ENCODE measurements at regions of chr19 and their contacts with region 1.

Region 1: DNA sequence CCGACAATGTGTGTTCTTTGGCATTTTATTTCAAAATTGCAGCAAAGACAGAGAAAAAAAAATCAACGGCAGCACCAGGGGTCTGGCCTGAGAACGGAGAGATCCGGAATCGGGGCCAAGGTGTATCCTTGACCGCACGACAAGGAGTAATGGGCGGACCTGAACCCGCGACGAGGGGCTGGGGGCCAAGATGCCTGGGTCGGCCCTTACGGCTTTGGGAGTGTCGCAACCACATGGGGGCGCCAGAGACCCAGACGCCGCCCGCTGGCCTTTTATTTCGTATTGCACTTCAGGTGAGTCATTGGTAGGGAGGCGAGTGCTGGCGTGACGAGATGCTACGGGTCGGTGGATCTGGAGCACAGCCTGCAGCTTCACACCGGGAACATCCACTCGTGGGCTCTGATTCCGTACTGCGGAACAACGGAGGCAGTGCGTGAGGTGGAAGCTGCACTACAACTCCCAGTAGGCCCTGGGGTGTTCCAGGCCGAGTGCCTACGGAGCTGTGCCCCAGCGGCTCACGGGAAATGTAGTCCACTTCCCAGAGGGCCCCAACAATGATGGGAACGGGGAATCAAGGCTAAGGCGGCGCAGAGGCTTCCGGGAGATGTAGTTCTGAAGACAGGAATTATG is 15.7 kb downstream of the BCAT2 start:
- DNase-seq: peak; percentile 92
- H3K4me3 ChIP-seq: peak overlapping the region; percentile 19 to 38
- H3K27ac ChIP-seq: peak overlapping the region; percentile 80 to 83
- H3K4me1 ChIP-seq: no peaks in the 10 kb centered on the region
- H3K27me3 ChIP-seq: no peaks in the 10 kb centered on the region
- CTCF ChIP-seq: peak; percentile 96 to 100 (median 99)
- POLR2A ChIP-seq: peak; percentile 8

Region 2: DNA sequence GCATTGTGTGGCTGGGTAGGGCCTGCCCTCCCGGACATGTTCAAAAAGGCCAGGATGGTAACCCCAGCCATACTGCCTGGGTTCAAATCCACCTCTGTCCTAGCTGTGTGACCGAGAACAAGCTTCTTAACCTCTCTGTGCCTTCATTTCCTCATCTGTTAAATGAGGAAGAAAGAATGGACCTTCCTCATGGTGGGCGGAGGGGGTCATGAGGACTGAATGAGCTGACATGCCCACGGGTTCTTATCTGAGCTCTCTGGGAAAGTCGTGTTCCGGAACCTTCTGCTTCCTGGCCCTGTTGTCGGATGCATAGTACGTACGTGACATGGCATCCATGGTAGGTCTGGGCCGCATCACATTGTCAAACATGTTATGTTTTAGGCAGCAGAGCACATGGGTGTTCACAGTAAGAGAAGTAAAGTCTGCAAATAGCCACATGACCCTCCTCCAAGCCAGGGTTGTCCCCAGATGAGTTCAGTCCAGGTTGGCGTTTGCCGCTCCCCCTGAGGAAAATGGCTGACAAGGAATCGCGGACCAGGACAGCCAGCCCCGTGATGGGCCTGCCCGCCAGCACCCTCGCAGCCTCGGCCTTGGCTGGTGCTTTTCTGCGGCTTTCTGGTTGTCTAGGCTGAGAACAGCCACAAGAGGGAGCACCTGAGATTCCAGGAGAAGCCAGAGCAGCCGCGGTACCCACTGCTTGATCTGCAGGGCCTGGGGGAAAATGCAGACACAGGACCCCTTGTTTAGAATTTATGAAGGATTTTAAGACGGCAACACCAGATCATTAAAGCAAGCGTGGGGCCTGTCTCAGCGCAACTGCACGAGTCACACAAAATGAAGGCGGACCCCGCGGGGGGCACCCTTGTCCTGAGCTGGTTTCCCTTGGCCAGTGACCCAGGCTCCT is 120.0 kb before region 1 on chr19:
- intact Hi-C with region 1: no loop called
- DNase-seq: peak; percentile 84
- H3K4me3 ChIP-seq: no peak overlapping the region
- H3K27ac ChIP-seq: no peak overlapping the region
- H3K4me1 ChIP-seq: no peaks in the 10 kb centered on the region
- H3K27me3 ChIP-seq: no peaks in the 10 kb centered on the region
- CTCF ChIP-seq: peak; percentile 74 to 90 (median 84)
- POLR2A ChIP-seq: no peak

Region 3: GRCh38 chr19:48738557-48739399 is 56.4 kb before region 1 on chr19:
- intact Hi-C with region 1: no loop called
- DNase-seq: peak; percentile 94
- H3K4me3 ChIP-seq: peak overlapping the region; percentile 38 to 40
- H3K27ac ChIP-seq: peak overlapping the region; percentile 61 to 71
- H3K4me1 ChIP-seq: peaks cover 7% of the 10 kb centered on the region
- H3K27me3 ChIP-seq: no peaks in the 10 kb centered on the region
- CTCF ChIP-seq: peak; percentile 41 to 78 (median 62)
- POLR2A ChIP-seq: peak; percentile 26

Region 4: DNA sequence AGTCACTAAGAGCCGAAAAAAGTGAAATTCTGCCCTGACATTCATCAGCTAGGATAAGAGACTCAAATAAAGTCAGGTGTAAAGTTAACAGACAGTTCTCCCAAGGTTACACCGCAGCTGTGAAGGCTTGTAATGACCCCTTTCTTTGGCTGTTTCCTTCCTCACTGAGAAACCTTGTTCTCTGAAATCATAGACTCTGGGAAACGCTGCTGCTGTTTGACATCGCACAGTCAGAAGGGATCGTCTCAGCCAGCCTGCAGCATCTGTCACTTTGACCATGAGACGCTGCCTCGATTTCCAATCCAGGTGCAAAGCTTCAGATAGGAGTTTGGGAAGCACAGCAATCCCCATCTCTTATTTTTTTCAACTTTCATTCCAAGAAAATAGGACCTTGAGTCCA is 15.0 kb after region 1 on chr19:
- intact Hi-C with region 1: loop called (anchors 2 kb)
- DNase-seq: no peak
- H3K4me3 ChIP-seq: peak overlapping the region; percentile 57 to 60
- H3K27ac ChIP-seq: peak overlapping the region; percentile 88 to 92
- H3K4me1 ChIP-seq: peaks cover 3% of the 10 kb centered on the region
- H3K27me3 ChIP-seq: no peaks in the 10 kb centered on the region
- CTCF ChIP-seq: no peak
- POLR2A ChIP-seq: no peak

Region 5: DNA sequence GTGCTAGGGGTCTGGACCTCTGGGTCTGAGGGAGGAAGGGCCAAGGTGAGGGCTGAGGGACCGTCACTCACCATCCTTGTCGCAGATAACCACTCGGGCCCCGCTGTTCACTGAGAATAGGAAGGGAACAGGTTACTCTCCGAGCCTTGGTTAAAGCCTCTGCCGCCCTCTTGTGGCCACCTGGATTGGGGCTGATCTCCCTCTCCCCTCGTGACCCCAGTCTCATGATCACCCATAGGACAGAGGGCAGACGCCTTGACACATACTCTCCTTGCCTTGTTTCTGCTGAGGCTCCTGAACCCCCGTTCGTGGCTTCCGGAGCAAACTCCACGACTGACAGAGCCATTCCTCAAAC is 40.5 kb after region 1 on chr19:
- intact Hi-C with region 1: loop called (anchors 1 kb)
- DNase-seq: peak; percentile 94
- H3K4me3 ChIP-seq: peak overlapping the region; percentile 10 to 27
- H3K27ac ChIP-seq: peak overlapping the region; percentile 63 to 67
- H3K4me1 ChIP-seq: no peaks in the 10 kb centered on the region
- H3K27me3 ChIP-seq: no peaks in the 10 kb centered on the region
- CTCF ChIP-seq: peak; percentile 93 to 99 (median 98)
- POLR2A ChIP-seq: peak; percentile 26

Region 6: GRCh38 chr19:48970923-48971395 is 175.8 kb after region 1 on chr19:
- intact Hi-C with region 1: loop called (anchors 5 kb)
- DNase-seq: peak; percentile 67
- H3K4me3 ChIP-seq: no peak overlapping the region
- H3K27ac ChIP-seq: peak overlapping the region in 1 of 2 donors; percentile 17
- H3K4me1 ChIP-seq: peaks cover 7% of the 10 kb centered on the region
- H3K27me3 ChIP-seq: no peaks in the 10 kb centered on the region
- CTCF ChIP-seq: peak; percentile 78 to 89 (median 82)
- POLR2A ChIP-seq: no peak